Endothelial cell of umbilical vein (primary cell): ENCODE measurements at regions of chr14 and their contacts with region 1.

Region 1: GRCh38 chr14:60266021-60266937 is 17.3 kb downstream of the PPM1A start:
- DNase-seq: peak; percentile 44
- H3K4me3 ChIP-seq: no peak overlapping the region
- H3K27ac ChIP-seq: no peak overlapping the region
- H3K4me1 ChIP-seq: no peaks in the 10 kb centered on the region
- H3K27me3 ChIP-seq: no peaks in the 10 kb centered on the region
- CTCF ChIP-seq: peak; percentile 47 to 52
- POLR2A ChIP-seq: no peak

Region 2: DNA sequence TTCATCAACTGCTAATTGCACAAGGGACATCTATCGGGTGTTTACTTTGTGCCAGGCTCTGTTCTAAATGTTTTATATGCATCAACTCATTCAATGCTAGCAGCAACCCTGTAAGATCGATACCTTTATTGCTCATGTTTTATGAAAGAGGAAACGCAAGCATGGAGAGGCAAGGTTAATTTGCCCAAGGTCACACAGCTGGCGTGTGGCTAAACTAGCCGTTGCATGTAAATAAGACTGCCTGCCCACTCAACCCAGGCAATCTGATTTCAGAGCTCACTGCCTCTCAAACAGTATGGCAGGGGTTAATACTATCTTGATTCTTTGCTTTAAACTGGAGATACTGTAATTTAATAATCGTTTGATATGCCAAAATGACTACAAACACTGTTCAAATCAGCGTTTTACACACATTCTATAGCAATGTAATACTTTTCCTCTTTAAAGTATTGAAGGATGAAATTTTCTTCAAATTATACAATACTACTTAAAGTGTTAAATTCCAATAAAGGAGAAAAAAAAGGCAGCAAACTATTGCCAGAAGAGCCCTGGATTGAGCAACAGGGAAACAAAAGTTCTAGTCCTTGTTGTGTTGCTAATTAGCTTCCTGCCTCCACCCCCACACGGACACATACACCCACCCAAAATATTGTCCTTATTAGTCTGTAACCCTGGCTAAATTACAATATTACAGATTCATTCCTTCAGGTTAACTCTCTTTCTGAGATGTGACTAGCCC is 62.0 kb before region 1 on chr14:
- CTCF ChIA-PET with region 1: no interaction called
- POLR2A ChIA-PET with region 1: no interaction called
- dilution Hi-C with region 1: no loop called
- intact Hi-C with region 1: no loop called
- DNase-seq: no peak
- H3K4me3 ChIP-seq: no peak overlapping the region
- H3K27ac ChIP-seq: no peak overlapping the region
- H3K4me1 ChIP-seq: no peaks in the 10 kb centered on the region
- H3K27me3 ChIP-seq: peaks cover 3 to 6% of the 10 kb centered on the region in 2 experiments
- CTCF ChIP-seq: no peak
- POLR2A ChIP-seq: no peak

Region 3: GRCh38 chr14:60276342-60276741 is 10.1 kb after region 1 on chr14:
- CTCF ChIA-PET with region 1: interaction called, 15 read pairs
- POLR2A ChIA-PET with region 1: no interaction called
- dilution Hi-C with region 1: no loop called
- intact Hi-C with region 1: no loop called
- DNase-seq: no peak
- H3K4me3 ChIP-seq: no peak overlapping the region
- H3K27ac ChIP-seq: no peak overlapping the region
- H3K4me1 ChIP-seq: no peaks in the 10 kb centered on the region
- H3K27me3 ChIP-seq: no peaks in the 10 kb centered on the region
- CTCF ChIP-seq: no peak
- POLR2A ChIP-seq: no peak

Region 4: DNA sequence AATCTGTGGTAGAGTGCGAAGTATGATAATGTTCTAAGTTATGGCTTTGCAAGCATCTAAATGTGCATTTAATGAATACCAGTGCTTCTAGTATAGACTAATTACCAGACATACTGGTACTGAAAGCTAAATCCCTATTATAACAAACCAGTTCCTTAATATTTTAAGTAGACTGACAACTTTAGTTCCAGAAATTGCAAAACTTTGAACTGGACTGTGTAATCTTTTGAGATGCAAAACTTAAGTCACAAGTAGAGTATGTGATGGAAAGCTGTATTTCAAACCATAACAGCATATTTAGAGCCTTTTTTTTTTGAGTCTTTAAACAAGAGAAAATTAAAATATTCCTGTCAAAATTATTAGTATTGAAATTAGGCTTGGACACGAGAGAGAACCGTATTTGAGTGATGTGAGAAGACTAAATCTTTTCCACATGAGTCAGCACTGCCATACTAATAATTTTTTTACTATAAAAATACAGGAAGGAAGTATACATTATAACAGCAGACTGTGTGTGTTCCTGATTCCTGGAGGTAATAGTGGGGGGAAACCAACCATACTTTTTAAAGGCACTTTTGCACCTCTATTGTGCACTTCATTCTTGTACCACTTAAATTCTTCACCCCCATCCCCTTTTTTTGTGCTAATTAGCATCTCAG is 28.3 kb after region 1 on chr14:
- CTCF ChIA-PET with region 1: interaction called, 10 read pairs
- POLR2A ChIA-PET with region 1: no interaction called
- dilution Hi-C with region 1: no loop called
- intact Hi-C with region 1: no loop called
- DNase-seq: peak; percentile 32
- H3K4me3 ChIP-seq: no peak overlapping the region
- H3K27ac ChIP-seq: no peak overlapping the region
- H3K4me1 ChIP-seq: peaks cover 15% of the 10 kb centered on the region
- H3K27me3 ChIP-seq: no peaks in the 10 kb centered on the region
- CTCF ChIP-seq: no peak
- POLR2A ChIP-seq: no peak

Region 5: DNA sequence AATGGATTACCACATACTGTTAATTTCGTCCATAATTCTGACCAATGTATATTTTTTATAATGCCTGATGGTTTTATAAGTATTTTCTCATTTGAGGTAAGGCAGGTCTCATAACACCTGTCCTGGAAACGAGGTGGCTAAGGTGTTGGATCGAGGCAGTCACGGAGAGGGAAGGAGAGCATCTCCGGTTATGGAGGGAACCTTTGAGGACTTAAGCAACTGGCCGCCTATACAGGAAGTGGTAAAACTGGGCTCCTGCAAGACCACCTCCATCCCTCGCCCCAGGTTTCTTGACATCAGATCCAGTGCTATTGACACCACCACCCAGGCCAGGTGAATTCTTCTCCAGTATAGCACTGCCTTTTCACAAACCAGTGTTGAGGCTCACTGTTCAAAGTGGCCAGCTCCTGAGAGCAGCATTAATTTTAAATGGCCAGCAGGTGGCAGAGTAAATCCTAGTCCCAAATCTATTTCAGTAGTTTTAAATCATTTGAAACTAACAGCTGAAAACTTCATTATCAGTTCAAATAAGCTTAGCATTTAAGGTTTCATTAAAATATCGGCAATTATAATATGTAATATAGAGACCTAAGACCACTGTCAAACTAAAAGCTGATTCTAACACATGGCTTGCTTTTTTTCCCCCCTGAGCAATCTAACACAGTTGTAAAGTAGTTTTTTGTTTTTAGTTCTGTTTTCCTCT is 83.5 kb after region 1 on chr14:
- CTCF ChIA-PET with region 1: interaction called, 22 read pairs
- POLR2A ChIA-PET with region 1: no interaction called
- dilution Hi-C with region 1: no loop called
- intact Hi-C with region 1: no loop called
- DNase-seq: peak; percentile 51
- H3K4me3 ChIP-seq: no peak overlapping the region
- H3K27ac ChIP-seq: no peak overlapping the region
- H3K4me1 ChIP-seq: peaks cover 4% of the 10 kb centered on the region
- H3K27me3 ChIP-seq: peaks cover 8 to 24% of the 10 kb centered on the region in 2 experiments
- CTCF ChIP-seq: peak; percentile 54 to 59
- POLR2A ChIP-seq: no peak

Region 6: DNA sequence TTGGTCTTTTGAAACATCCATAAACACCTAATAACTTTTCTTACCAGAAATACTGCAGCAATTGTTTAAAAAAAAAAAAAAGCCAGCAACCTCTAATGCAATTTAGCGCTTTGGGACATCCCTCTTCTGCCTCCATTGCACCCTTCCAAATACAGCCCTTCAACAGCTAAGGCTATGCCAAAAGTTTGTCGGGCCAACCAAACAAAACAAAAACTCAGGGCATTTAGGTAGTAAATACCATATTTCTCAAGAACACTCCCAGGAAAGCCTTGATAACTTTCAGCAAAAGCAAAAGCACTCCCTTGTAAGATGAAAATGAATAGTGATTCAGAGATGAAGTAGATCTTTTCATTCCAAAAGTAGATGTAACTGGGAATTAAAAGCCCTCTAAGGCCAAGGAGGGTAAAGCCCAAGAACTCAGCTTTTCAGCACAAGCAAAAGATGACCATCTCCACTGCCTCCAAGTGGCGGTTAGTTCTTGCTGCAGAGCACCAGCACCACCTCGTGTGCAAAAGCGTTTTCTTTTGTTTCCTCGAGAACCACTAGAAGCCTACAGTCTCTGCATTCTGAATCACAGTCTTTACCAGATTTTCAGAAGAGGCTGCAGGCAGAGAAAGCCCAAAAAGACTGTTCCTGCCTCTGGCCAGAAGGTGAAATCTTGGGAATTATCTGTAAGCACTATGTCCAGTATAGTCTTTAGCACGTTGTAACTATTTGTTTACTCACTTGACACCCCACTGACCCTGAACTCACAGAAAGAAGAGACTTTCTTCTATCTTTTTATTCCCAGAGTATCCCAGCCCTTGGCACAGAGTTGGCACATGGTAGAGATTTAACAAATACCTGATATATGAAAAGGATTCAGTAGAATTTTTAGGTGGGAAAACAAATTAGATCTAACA is 295.8 kb after region 1 on chr14:
- CTCF ChIA-PET with region 1: interaction called, 30 read pairs
- POLR2A ChIA-PET with region 1: no interaction called
- dilution Hi-C with region 1: no loop called
- intact Hi-C with region 1: loop called (anchors 1 kb)
- DNase-seq: peak; percentile 59
- H3K4me3 ChIP-seq: no peak overlapping the region
- H3K27ac ChIP-seq: no peak overlapping the region
- H3K4me1 ChIP-seq: no peaks in the 10 kb centered on the region
- H3K27me3 ChIP-seq: peaks cover 0 to 8% of the 10 kb centered on the region in 2 experiments
- CTCF ChIP-seq: peak; percentile 45 to 70
- POLR2A ChIP-seq: no peak